ENCODE measurements at regions of chr18 and their contacts with region 1.

Region 1: DNA sequence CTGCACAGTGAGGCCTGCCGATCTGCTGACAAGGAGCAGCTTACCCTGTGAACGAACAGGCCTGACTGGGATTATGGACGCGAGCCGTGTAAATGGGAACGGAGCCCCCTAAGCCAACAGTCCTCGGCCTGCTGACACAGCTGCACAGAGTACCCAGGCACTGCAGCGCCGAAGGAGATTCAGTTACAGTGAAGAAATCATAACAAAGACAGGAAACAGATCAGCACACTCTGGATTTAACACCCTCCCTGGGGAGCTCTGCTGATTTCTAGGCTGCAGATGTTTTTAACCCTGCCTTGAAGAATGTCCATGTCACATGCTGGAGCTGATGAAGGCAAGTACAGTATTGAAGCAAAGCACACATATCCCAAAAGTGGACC is 43.4 kb downstream of the COLEC12 start:
- DNase-seq: peak; percentile 36 to 48
- ATAC-seq: peak; percentile 76 to 83
- H3K4me3 ChIP-seq: peak overlapping the region in 3 of 4 donors; percentile 7 to 42 (median 25)
- H3K27ac ChIP-seq: peak overlapping the region; percentile 37 to 55 (median 41)
- H3K4me1 ChIP-seq: peaks cover 9 to 10% of the 10 kb centered on the region in 2 donors
- H3K27me3 ChIP-seq: no peaks in the 10 kb centered on the region
- CTCF ChIP-seq: no peak
- POLR2A ChIP-seq: no peak

Region 2: GRCh38 chr18:374721-375168 is 82.4 kb before region 1 on chr18:
- in situ Hi-C with region 1: no loop called
- intact Hi-C with region 1: loop called (anchors 5 kb)
- DNase-seq: peak; percentile 47 to 64
- ATAC-seq: peak; percentile 71 to 78
- H3K4me3 ChIP-seq: no peak overlapping the region
- H3K27ac ChIP-seq: peak overlapping the region; percentile 30 to 52 (median 41)
- H3K4me1 ChIP-seq: peaks cover 0 to 6% of the 10 kb centered on the region in 2 donors
- H3K27me3 ChIP-seq: no peaks in the 10 kb centered on the region
- CTCF ChIP-seq: no peak
- POLR2A ChIP-seq: no peak

Region 3: GRCh38 chr18:475202-476031 is 18.3 kb after region 1 on chr18:
- in situ Hi-C with region 1: no loop called
- intact Hi-C with region 1: no loop called
- DNase-seq: no peak
- ATAC-seq: no peak
- H3K4me3 ChIP-seq: no peak overlapping the region
- H3K27ac ChIP-seq: peak overlapping the region in 1 of 4 donors; percentile 22
- H3K4me1 ChIP-seq: no peaks in the 10 kb centered on the region
- H3K27me3 ChIP-seq: no peaks in the 10 kb centered on the region
- CTCF ChIP-seq: no peak
- POLR2A ChIP-seq: no peak

Region 4: DNA sequence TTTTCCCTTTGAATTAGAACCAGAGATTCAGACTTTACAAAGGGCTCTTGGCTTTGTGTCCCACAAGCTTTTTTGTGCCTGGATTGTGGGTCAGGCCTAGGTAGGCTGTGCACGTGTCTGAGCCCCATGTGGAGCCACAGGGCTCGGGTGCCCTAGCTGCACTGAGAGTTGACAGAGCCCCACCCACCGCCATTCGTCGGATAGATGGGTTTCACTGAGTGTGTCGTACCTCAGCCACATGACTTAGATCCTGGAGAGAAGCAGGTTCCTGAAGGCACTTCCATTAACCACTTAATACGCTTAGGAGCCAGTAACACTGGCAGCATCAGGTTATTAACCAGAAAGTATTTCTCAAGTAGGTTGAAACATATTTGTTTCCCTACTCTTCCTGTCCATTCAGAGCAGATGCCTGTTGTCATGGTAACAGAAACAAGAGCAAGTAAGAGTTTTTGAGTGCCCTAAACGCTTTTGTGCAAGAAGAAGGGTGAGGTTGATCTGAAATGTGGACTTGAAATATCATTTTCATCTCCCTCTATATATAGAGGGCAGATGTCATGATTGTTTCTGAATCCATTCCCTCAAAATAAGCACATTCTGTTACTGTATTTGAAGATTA is 477.5 kb after region 1 on chr18:
- in situ Hi-C with region 1: no loop called
- intact Hi-C with region 1: no loop called
- DNase-seq: no peak
- ATAC-seq: no peak
- H3K4me3 ChIP-seq: no peak overlapping the region
- H3K27ac ChIP-seq: no peak overlapping the region
- H3K4me1 ChIP-seq: no peaks in the 10 kb centered on the region
- H3K27me3 ChIP-seq: no peaks in the 10 kb centered on the region
- CTCF ChIP-seq: no peak
- POLR2A ChIP-seq: no peak